Gastrocnemius medialis (tissue), 4 donors: ENCODE measurements at regions of chr16 and their contacts with region 1.

Region 1: GRCh38 chr16:15440852-15441251 is 6.5 kb downstream of the BMERB1 start:
- DNase-seq: no peak
- ATAC-seq: no peak
- H3K4me3 ChIP-seq: no peak overlapping the region
- H3K27ac ChIP-seq: peak overlapping the region; percentile 35 to 78 (median 62)
- H3K4me1 ChIP-seq: peaks cover 19 to 23% of the 10 kb centered on the region in 2 donors
- H3K27me3 ChIP-seq: no peaks in the 10 kb centered on the region
- CTCF ChIP-seq: no peak
- POLR2A ChIP-seq: no peak

Region 2: DNA sequence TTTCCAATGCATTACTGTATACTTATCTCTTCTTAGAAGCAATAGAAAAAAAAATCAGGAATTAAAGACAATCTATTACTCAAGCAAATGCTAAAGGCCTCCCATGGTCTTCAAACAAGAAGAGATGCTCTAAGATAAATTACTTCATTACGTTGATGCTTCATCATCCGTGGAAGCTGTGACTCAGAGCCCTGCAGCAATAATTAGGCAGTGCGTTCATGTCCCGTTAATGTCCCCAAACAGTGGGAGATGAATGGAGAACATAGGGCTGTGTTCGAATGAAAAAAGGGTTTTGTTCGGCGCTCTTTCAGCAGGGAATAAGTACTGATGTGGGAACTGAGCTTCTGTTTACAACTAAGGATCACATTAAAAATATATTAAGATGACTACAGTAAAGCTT is 481.9 kb before region 1 on chr16:
- in situ Hi-C with region 1: no loop called
- intact Hi-C with region 1: loop called (anchors 5 kb)
- DNase-seq: no peak
- ATAC-seq: no peak
- H3K4me3 ChIP-seq: no peak overlapping the region
- H3K27ac ChIP-seq: no peak overlapping the region
- H3K4me1 ChIP-seq: peaks cover 16 to 17% of the 10 kb centered on the region in 2 donors
- H3K27me3 ChIP-seq: no peaks in the 10 kb centered on the region
- CTCF ChIP-seq: no peak
- POLR2A ChIP-seq: no peak

Region 3: GRCh38 chr16:15482068-15482747 is 41.4 kb after region 1 on chr16:
- in situ Hi-C with region 1: no loop called
- intact Hi-C with region 1: no loop called
- DNase-seq: peak; percentile 15 to 56
- ATAC-seq: peak; percentile 81 to 82
- H3K4me3 ChIP-seq: no peak overlapping the region
- H3K27ac ChIP-seq: peak overlapping the region; percentile 6 to 33 (median 9)
- H3K4me1 ChIP-seq: peaks cover 0 to 5% of the 10 kb centered on the region in 2 donors
- H3K27me3 ChIP-seq: no peaks in the 10 kb centered on the region
- CTCF ChIP-seq: no peak
- POLR2A ChIP-seq: no peak